Head of caudate nucleus (tissue), 42 donors: ENCODE measurements at regions of chr16 and their contacts with region 1.

Region 1: DNA sequence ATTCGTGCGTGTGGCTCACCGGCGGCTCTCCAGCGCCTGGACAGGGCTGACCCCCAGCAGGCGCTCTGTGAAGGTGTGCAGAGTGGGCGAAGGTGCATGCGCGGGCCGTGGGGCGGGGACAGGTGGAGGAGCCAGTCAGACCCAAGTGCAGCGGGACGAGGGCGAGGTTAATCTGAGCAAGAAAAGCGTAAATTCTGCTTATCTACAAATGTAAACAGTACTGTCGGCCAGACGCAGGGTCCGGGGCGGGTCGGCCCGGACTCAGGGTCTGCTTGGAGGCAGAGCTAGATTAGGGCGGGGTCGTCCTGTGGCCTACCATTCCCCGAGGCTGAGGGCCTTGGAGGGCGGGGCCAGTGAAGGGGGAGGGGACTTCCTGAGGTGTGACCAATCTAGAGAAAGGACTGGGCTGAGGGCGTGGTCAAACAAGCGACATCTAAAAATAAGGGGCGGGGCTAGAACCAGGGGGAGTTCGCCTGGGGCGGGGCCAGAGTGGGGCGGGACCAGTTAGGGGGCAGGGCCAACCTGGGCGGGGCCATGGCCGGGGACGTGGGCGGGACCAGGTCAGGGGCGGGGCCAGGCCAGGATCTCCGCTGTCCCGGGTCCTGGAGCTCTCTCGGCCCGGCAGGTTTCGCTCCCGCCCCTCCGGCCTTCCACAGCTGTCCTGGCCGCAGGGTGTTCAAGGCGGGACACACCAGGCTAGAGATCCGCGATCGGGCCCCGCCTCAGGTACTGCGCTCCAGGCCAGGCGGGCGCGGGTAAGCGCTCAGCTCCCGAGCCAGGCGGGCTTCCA is at the start of gene SEC14L5:
- DNase-seq: peak; percentile 95 to 100 (median 99)

Region 2: GRCh38 chr16:4694664-4695451 is 263.1 kb before region 1 on chr16:
- intact Hi-C with region 1: loop called (anchors 5 kb)
- DNase-seq: peak in 40 of 42 donors; percentile 45 to 86 (median 66)

Region 3: DNA sequence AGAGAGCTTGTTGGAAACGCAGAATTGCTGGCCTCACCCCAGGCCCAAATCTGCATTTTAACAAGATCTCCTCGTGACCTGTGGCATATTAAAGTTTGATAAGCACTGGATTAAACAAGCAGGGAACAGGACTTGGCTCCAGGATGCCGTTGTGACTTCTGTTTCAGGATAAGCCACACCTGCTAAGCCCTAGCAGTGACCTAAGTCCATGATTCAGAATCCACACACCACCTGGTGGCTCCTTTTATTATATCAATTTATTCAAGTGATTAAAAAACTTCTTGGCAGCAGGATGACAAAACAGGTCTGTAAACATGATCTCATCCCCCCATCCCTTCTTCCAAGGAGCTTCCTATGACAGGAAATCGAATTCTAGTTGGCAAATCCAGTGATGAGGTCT is 66.7 kb after region 1 on chr16:
- intact Hi-C with region 1: loop called (anchors 5 kb)
- DNase-seq: peak in 1 of 42 donors; percentile 59